Activated CD8-positive, alpha-beta T cell treated with anti-CD3 and anti-CD28 coated beads, Interleukin-2, amount 10 ng/mL, durations not matched to agents 7 days and 5 days (primary cell): ENCODE measurements at regions of chr19 and their contacts with region 1.

Region 1: GRCh38 chr19:3100865-3101730 is 6.9 kb downstream of the GNA11 start:
- DNase-seq: no peak
- ATAC-seq: no peak
- H3K4me3 Mint-ChIP-seq: no peak overlapping the region
- H3K27ac Mint-ChIP-seq: no peak overlapping the region
- H3K4me1 Mint-ChIP-seq: peaks cover 18% of the 10 kb centered on the region
- H3K27me3 Mint-ChIP-seq: peaks cover 18% of the 10 kb centered on the region

Region 2: DNA sequence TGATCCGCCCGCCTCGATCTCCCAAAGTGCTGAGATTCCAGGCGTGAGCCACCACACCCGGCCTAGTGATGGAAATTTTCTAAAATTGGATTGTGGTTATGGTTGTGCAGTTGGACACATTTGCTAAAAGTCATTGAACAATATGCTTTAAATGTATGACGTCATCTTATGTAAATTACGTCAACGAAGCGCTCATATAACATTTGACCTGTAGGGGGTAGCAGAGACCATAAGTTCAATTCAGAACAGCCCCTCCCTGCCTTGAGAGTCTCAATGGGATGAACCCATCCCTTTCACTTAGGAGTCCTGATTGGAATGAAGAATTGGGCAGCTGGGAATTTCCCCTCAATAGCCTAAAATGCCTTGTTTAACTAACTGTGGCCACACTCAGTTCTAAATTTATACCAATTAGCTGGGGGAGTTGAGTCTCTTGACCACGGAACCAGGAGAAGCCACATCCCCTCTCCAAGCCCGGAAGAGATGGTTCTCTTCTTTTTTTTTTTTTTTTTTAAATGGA is 139.0 kb before region 1 on chr19:
- CTCF ChIA-PET with region 1: interaction called, 54 read pairs
- POLR2A ChIA-PET with region 1: no interaction called
- DNase-seq: peak; percentile 75
- ATAC-seq: peak; percentile 79
- H3K4me3 Mint-ChIP-seq: peak overlapping the region; percentile 59
- H3K27ac Mint-ChIP-seq: peak overlapping the region; percentile 49
- H3K4me1 Mint-ChIP-seq: peaks cover 5% of the 10 kb centered on the region
- H3K27me3 Mint-ChIP-seq: no peaks in the 10 kb centered on the region

Region 3: DNA sequence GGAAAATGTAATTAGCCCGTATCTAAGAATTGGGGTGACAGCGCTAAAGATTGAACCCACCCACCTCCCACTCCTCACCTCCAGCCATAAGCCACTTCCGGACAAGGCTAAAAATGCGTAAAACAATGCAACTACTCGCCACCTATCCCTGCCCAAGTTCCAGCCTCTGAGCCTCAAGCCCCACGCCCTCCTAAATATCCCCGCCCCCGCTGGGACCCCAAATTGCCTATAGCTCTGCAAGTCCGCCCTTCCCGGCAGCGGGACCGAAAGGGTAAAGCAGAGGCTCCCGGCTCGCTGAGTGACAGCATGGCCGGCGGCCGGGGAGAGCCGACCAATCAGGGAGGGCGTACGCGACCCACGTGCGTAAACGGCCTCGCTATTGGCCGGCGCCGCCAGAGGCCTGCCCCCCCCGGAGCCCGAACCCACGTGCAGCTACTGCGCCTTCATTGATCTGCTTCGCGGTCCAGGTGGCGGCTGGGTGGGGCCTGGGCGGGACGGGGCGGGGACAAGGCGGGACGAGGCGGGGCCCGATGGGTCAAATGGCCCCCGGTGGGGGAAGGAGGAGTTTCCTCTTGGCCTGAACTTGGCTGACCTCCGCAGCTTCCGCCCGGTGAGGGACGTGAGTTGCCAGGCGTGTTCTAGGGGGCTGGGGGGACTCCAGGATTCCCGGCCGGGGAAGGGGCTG is 124.0 kb before region 1 on chr19 and contains the start of gene TLE6:
- CTCF ChIA-PET with region 1: interaction called, 17 read pairs
- POLR2A ChIA-PET with region 1: no interaction called
- DNase-seq: peak; percentile 97
- ATAC-seq: peak; percentile 100
- H3K4me3 Mint-ChIP-seq: peak within 1 kb of the TSS; percentile 94
- H3K27ac Mint-ChIP-seq: peak within 1 kb of the TSS; percentile 93
- H3K4me1 Mint-ChIP-seq: peaks cover 21% of the 10 kb centered on the region
- H3K27me3 Mint-ChIP-seq: peaks cover 9% of the 10 kb centered on the region
- total RNA-seq, gene TLE6: 2.0 to 2.7 TPM

Region 4: DNA sequence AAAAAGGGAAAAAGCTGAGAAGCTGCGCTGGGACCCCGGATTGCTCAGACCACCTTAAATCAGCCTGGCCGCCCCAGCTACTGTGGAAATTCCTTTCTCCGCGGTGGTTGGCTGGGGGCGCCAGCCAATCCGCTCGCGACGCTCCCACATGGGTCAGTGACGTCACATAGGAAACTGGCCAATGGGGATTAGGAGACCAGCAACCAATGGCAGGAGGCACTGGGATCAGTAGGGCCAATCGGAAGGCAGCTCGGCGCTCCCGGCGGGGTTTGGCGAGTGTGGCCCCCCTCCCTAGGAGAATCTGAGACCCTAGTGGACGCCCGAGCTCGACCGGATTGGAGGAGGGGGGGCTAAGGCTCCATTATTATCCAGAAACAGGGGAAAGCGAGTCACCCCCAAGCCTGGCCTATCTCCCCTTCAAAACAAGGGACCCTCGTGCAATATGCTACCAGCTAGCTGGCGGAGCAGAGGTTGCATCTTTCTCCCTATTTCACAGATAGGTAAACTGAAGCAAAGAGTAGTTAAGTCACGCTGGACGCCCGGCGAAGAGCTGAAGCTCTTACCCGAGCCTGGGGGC is 65.5 kb before region 1 on chr19:
- CTCF ChIA-PET with region 1: interaction called, 19 read pairs
- POLR2A ChIA-PET with region 1: no interaction called
- DNase-seq: peak; percentile 98
- ATAC-seq: peak; percentile 94
- H3K4me3 Mint-ChIP-seq: peak overlapping the region; percentile 87
- H3K27ac Mint-ChIP-seq: peak overlapping the region; percentile 95
- H3K4me1 Mint-ChIP-seq: peaks cover 30% of the 10 kb centered on the region
- H3K27me3 Mint-ChIP-seq: peaks cover 30% of the 10 kb centered on the region

Region 5: DNA sequence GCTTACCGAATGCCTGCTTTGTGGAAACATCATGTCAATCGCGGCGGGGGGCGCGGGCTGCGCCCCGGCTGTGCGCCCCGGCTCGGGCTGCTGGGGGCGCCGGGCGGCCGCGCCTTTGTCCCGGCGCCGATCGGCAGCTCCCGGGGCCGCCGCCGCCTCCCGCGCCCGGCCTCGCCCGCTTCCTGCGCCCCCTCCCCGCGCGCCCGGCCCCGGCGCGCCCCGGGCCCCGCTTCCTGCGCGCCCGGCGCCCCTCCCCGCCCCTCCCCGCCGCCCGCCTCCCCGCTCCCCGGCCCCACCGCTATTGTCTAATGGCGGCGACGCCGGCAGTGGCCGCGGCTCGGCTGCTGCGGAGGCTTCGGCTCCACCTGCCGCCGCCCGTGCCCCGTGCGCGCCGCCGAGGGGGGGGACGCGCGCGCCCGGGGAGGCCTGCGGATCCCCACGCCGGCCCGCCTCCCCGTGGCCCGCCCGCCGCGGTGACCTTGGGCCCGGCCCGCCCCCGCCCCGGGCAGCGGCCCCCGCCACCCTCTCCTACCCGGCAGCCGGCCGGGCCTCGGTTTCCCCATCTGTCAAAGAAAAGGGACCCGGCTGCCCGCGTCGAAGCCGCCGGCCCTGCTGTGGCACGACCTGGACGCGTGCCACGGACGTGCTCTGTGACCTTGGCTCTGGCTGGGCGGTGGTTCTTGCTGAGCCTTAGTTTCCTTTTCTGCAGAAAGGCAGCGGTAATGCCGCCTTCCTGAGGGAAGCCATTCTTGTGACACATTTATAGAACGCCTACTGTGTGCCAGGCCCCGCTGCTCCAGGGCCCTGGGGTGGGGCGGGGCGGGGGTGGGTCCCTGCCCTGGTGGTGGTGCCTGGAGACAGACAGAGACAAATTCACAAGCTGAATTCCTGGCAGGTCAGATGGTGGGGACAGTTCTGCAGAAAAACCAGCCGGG is 38.7 kb before region 1 on chr19 and contains the start of gene TLE5:
- CTCF ChIA-PET with region 1: interaction called, 14 read pairs
- POLR2A ChIA-PET with region 1: interaction called, 4 read pairs
- DNase-seq: peak; percentile 71
- ATAC-seq: peak; percentile 66
- H3K4me3 Mint-ChIP-seq: peak within 1 kb of the TSS; percentile 76
- H3K27ac Mint-ChIP-seq: peak within 1 kb of the TSS; percentile 96
- H3K4me1 Mint-ChIP-seq: peaks cover 42% of the 10 kb centered on the region
- H3K27me3 Mint-ChIP-seq: no peaks in the 10 kb centered on the region
- total RNA-seq, gene TLE5: 635 to 655 TPM

Region 6: GRCh38 chr19:3075895-3076431 is 25.1 kb before region 1 on chr19:
- CTCF ChIA-PET with region 1: interaction called, 47 read pairs
- POLR2A ChIA-PET with region 1: interaction called, 3 read pairs
- DNase-seq: peak; percentile 79
- ATAC-seq: peak; percentile 81
- H3K4me3 Mint-ChIP-seq: no peak overlapping the region
- H3K27ac Mint-ChIP-seq: no peak overlapping the region
- H3K4me1 Mint-ChIP-seq: peaks cover 2% of the 10 kb centered on the region
- H3K27me3 Mint-ChIP-seq: no peaks in the 10 kb centered on the region

Region 7: DNA sequence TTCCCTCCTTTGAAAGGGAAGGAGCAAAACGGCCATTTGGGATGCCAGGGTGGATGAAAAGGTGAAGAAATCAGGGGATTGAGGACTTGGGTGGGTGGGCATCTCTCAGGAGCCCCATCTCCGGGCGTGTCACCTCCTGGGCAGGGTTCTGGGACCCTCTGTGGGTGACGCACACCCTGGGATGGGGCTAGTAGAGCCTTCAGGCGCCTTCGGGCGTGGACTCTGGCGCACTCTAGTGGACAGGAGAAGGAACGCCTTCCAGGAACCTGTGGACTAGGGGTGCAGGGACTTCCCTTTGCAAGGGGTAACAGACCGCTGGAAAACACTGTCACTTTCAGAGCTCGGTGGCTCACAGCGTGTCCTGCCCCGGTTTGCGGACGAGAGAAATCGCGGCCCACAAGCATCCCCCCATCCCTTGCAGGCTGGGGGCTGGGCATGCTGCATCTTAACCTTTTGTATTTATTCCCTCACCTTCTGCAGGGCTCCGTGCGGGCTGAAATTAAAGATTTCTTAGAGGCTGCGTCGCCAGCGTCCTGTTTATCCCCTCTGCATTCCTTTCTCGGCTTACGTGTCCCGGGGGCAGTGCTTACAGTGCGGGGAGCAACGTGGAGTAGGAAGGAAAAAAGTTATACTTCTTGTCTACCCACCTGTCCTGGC is 62.3 kb after region 1 on chr19:
- CTCF ChIA-PET with region 1: interaction called, 17 read pairs
- POLR2A ChIA-PET with region 1: no interaction called
- DNase-seq: peak; percentile 78
- ATAC-seq: peak; percentile 91
- H3K4me3 Mint-ChIP-seq: no peak overlapping the region
- H3K27ac Mint-ChIP-seq: peak overlapping the region; percentile 67
- H3K4me1 Mint-ChIP-seq: peaks cover 52% of the 10 kb centered on the region
- H3K27me3 Mint-ChIP-seq: no peaks in the 10 kb centered on the region

Region 8: DNA sequence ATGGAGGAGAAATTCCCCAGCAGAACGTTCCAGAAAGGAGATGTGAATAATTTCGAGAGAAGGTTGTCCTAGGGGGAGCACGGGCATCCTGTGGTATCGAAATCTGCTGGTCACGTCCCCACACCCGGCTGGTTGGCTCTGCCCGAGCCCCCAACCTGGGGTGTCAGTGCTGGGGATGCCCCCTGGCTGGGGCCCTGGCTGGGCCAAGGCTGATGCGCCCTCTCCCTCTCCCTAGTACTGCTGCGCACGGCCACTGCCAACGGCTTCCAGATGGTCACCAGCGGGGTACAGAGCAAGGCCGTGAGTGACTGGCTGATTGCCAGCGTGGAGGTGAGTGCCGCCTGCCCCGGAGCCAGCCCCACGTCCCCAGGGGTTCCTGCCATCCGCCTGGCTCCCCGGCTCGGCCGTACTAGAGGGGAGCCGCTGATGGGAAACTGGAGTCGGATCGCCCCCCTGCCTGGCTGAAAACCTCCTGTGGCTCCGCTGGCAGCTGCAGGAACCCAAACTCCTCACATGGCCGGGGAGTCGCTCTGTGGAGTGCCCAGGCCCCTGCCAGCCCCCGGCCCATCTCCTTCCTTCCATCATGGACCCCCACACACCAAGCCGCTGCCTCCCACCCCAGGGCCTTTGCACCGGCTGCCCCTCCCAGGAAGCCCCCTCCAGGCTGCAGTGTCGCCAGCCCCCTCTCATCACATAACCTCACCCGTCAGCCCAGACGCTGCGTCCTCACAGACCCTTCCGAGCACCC is 95.0 kb after region 1 on chr19:
- CTCF ChIA-PET with region 1: no interaction called
- POLR2A ChIA-PET with region 1: no interaction called
- DNase-seq: no peak
- ATAC-seq: no peak
- H3K4me3 Mint-ChIP-seq: no peak overlapping the region
- H3K27ac Mint-ChIP-seq: no peak overlapping the region
- H3K4me1 Mint-ChIP-seq: no peaks in the 10 kb centered on the region
- H3K27me3 Mint-ChIP-seq: no peaks in the 10 kb centered on the region